PC-9 (cell line): ENCODE measurements at regions of chr5 and their contacts with region 1.

Region 1: GRCh38 chr5:137220523-137220927 is 278.6 kb downstream of the SPOCK1 start:
- DNase-seq: peak; percentile 35 to 92
- H3K4me3 ChIP-seq: no peak overlapping the region
- H3K27ac ChIP-seq: no peak overlapping the region
- H3K4me1 ChIP-seq: peaks cover 26% of the 10 kb centered on the region
- H3K27me3 ChIP-seq: no peaks in the 10 kb centered on the region
- CTCF ChIP-seq: peak; percentile 79

Region 2: GRCh38 chr5:136802383-136802782 is 418.1 kb before region 1 on chr5:
- CTCF ChIA-PET with region 1: no interaction called
- POLR2A ChIA-PET with region 1: no interaction called
- intact Hi-C with region 1: loop called (anchors 2 kb)
- DNase-seq: peak in 1 of 2 experiments; percentile 21
- H3K4me3 ChIP-seq: no peak overlapping the region
- H3K27ac ChIP-seq: no peak overlapping the region
- H3K4me1 ChIP-seq: no peaks in the 10 kb centered on the region
- H3K27me3 ChIP-seq: no peaks in the 10 kb centered on the region
- CTCF ChIP-seq: peak; percentile 67

Region 3: DNA sequence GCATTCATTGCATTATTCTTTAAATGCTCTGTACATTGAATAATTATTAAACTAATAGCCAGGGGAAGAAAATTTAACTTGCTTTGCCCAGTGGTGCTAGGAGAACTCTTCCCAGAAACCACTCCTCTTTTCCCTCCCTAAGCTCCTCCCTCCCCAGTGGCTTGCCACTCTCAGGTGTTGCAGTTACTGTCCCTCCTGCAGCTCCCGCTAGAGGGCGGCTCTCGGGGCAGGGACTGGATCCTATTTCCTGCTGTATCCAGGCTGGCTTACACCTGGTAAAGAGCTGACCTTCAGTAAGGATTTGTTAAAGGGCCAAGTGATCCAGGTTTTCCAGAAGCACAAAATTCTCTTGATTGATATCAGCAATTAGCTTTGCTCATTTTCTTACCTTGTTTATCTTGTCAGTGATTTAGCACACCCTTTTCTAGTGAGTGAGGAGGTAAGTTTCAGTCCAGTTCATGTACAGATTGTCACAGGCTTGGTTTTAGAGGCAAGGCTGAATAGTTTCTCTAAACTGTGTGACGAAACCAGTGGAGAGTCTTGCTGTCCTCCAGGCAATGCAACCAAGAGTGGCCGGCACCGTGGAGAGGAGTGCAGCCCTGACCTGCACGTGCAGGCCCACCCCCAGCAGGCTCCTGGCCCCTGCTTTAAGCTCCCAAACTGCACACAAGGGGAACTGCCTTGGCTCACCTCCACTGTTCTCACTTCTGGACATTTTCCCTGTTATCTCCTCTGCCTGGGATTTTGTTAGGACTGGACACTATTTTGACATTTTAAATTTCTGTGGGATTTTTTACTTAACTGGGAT is 145.2 kb before region 1 on chr5:
- CTCF ChIA-PET with region 1: interaction called, 11 read pairs
- POLR2A ChIA-PET with region 1: no interaction called
- intact Hi-C with region 1: loop called (anchors 1 kb)
- DNase-seq: peak; percentile 72 to 84
- H3K4me3 ChIP-seq: no peak overlapping the region
- H3K27ac ChIP-seq: no peak overlapping the region
- H3K4me1 ChIP-seq: peaks cover 44% of the 10 kb centered on the region
- H3K27me3 ChIP-seq: no peaks in the 10 kb centered on the region
- CTCF ChIP-seq: peak; percentile 85

Region 4: DNA sequence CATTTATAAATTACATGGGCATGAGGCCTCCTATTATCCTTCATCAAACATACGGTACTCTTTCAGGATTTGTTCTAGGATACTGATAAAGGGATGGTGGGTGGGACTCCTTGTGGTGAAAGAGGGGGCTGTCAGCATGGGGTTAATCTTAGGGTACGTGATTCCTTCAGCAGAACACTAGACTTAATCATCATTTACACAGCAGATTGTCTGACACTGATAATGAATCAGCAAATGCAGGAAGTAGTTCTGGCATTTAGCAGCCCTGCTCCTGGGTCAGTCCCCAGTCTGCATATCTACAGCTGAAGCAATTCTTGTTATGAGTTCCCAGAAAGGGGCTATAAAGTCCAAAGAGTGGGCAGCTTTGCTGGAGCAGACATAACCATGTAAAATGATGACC is 106.0 kb before region 1 on chr5:
- CTCF ChIA-PET with region 1: no interaction called
- POLR2A ChIA-PET with region 1: no interaction called
- intact Hi-C with region 1: no loop called
- DNase-seq: peak; percentile 5 to 50
- H3K4me3 ChIP-seq: no peak overlapping the region
- H3K27ac ChIP-seq: no peak overlapping the region
- H3K4me1 ChIP-seq: peaks cover 17% of the 10 kb centered on the region
- H3K27me3 ChIP-seq: no peaks in the 10 kb centered on the region
- CTCF ChIP-seq: no peak

Region 5: DNA sequence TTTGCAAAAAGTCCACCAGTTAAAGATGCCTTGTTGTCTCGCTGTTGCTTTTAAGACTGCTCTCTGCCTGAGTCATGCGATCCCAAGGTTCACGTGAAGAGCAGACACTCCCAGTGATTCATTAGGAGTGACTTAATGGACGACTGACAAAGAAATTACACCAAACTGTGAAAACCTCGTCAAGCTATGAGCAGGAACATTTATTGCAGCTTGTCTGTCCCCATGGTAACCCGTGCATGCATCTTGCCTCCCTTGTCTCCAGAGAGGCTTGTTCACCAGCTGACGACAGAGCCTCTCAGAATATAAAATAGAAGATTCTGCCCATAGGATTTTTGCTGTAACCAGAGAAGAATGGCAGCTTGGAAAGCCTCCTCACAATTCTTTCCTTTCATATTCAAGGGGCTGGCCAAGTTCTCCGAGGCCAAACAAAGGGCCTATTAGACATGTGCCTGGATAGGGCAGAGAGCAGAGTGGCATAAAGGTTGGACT is 74.1 kb before region 1 on chr5:
- CTCF ChIA-PET with region 1: no interaction called
- POLR2A ChIA-PET with region 1: no interaction called
- intact Hi-C with region 1: loop called (anchors 2 kb)
- DNase-seq: peak; percentile 49 to 90
- H3K4me3 ChIP-seq: peak overlapping the region; percentile 34; the same call in 1 of the 2 replicates
- H3K27ac ChIP-seq: peak overlapping the region; percentile 65
- H3K4me1 ChIP-seq: peaks cover 43% of the 10 kb centered on the region
- H3K27me3 ChIP-seq: no peaks in the 10 kb centered on the region
- CTCF ChIP-seq: no peak

Region 6: GRCh38 chr5:137234973-137235943 is 14.7 kb after region 1 on chr5:
- CTCF ChIA-PET with region 1: no interaction called
- POLR2A ChIA-PET with region 1: no interaction called
- intact Hi-C with region 1: loop called (anchors 1 kb)
- DNase-seq: peak; percentile 58 to 98
- H3K4me3 ChIP-seq: 0 out of 2 replicates have a peak overlapping the region, but pooled peaks have one; percentile 12
- H3K27ac ChIP-seq: peak overlapping the region; percentile 81
- H3K4me1 ChIP-seq: peaks cover 57% of the 10 kb centered on the region
- H3K27me3 ChIP-seq: no peaks in the 10 kb centered on the region
- CTCF ChIP-seq: no peak

Region 7: DNA sequence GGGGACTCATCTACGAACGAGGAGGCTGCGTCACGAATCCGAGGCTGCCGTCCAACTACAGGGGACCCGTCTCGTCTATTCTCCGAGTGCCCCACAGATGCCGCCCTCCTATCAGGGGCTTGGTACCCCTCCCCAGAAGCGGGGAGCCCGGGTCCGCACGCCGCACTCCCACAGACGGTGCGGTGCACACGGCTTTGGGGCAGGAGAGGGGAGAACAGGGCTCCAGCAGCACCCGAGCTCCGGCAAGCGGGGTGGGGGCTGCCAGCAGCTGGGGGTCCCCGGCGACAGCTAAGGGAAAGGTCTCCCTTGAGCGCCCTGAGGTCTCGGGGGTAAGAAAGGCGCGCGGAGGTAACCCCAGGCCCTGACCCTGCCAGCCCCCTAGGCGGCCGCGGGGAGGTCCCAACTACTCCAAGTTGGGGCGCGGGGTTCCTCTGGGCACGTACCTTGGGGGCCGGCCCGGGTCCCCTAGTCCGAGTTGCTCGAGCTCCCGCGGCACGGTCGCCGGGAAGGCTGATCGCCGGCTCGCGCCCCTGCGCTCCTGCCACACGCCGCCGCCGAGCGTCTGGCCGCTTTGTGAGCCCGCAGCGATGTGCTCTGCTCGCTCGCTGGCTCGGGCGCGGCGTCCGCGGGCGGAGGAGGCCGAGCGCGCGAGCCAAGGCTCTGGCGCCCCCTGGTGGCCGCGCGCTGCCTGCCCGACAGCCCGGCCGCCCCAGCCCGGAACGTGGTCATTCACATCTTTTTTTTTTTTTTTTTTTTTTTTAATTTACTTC is 278.4 kb after region 1 on chr5 and contains the start of gene SPOCK1:
- CTCF ChIA-PET with region 1: interaction called, 3 read pairs
- POLR2A ChIA-PET with region 1: no interaction called
- intact Hi-C with region 1: loop called (anchors 1 kb)
- DNase-seq: peak; percentile 46 to 81
- H3K4me3 ChIP-seq: peak within 1 kb of the TSS; percentile 48; the same call in 1 of the 2 replicates
- H3K27ac ChIP-seq: no peak within 1 kb of the TSS
- H3K4me1 ChIP-seq: no peaks in the 10 kb centered on the region
- H3K27me3 ChIP-seq: no peaks in the 10 kb centered on the region
- CTCF ChIP-seq: peak; percentile 47; the same call in 1 of the 2 replicates
- total RNA-seq, gene SPOCK1: 23.9 and 31.8 TPM in 2 replicates